Left ventricle myocardium superior (tissue), 1 donor: ENCODE measurements at regions of chr1 and their contacts with region 1.

Region 1: GRCh38 chr1:91582431-91582921 is 81.8 kb downstream of the CDC7 start:
- DNase-seq: no peak
- ATAC-seq: peak; percentile 14

Region 2: DNA sequence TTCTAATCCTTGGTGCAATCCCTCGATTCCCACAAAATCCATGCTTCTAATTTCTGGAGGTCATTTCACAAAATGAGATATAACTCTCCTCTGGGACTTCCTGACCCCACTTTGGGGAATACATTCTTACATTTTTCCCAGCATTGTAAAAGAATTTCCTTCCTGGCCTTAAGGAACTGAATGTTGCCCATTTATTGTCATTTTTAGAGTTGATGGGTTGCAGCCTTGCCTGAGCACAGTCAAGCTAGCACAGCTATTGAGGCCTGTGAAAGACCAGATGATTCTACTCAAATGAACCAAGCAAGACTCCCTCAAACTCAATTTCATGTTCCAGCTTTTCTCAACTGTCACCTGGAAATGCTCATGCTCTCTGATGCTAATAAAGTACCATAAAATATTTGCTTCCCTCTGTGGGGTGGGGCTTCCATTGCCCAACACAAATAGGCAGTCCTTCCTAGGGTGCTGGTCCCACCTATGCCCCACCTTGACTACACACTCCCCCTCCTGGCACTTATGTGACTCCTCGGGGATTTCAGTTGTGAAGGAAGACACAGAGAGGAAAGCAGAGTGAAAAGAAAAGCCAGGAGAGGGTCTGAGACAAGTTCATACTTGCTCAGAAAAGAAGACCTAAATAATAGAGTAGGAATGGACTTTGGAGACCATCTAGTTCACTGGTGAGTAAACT is 105.8 kb before region 1 on chr1:
- intact Hi-C with region 1: no loop called
- DNase-seq: no peak
- ATAC-seq: peak; percentile 85

Region 3: GRCh38 chr1:91700332-91700731 is 117.9 kb after region 1 on chr1:
- intact Hi-C with region 1: loop called (anchors 10 kb)
- DNase-seq: no peak
- ATAC-seq: no peak